ENCODE measurements at regions of chr11 and their contacts with region 1.

Region 1: GRCh38 chr11:108697872-108698473 is 33.1 kb downstream of the DDX10 start:
- DNase-seq: peak; percentile 61
- H3K4me3 ChIP-seq: no peak overlapping the region
- H3K27ac ChIP-seq: peak overlapping the region; percentile 65
- H3K4me1 ChIP-seq: peaks cover 27% of the 10 kb centered on the region
- H3K27me3 ChIP-seq: no peaks in the 10 kb centered on the region
- CTCF ChIP-seq: peak; percentile 99

Region 2: GRCh38 chr11:108654994-108655631 is 42.9 kb before region 1 on chr11:
- CTCF ChIA-PET with region 1: no interaction called
- dilution Hi-C with region 1: no loop called
- in situ Hi-C with region 1: no loop called
- intact Hi-C with region 1: no loop called
- DNase-seq: peak; percentile 46
- H3K4me3 ChIP-seq: no peak overlapping the region
- H3K27ac ChIP-seq: no peak overlapping the region
- H3K4me1 ChIP-seq: no peaks in the 10 kb centered on the region
- H3K27me3 ChIP-seq: no peaks in the 10 kb centered on the region
- CTCF ChIP-seq: peak; percentile 61 to 82

Region 3: DNA sequence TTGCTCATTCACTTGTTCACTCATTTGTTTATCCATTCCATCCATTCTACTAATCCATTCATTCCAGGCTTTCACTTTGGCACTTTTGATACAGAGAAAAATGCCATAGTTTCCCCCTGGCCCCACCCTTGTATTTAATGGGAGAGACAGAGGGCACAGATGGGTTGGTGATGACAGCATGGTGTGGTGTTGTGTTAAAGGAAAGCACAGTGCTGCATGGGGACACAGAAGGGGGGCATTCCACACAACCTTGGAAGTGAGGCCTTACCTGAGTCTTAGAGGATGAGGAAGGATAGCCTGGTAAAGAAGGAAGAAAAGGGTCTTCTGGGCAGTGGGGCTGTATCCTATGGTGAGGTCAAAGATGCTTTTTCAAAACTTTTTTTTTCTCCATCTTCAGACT is 475.5 kb after region 1 on chr11:
- CTCF ChIA-PET with region 1: no interaction called
- dilution Hi-C with region 1: no loop called
- in situ Hi-C with region 1: no loop called
- intact Hi-C with region 1: loop called (anchors 10 kb)
- DNase-seq: no peak
- H3K4me3 ChIP-seq: no peak overlapping the region
- H3K27ac ChIP-seq: no peak overlapping the region
- H3K4me1 ChIP-seq: no peaks in the 10 kb centered on the region
- H3K27me3 ChIP-seq: no peaks in the 10 kb centered on the region
- CTCF ChIP-seq: no peak

Region 4: DNA sequence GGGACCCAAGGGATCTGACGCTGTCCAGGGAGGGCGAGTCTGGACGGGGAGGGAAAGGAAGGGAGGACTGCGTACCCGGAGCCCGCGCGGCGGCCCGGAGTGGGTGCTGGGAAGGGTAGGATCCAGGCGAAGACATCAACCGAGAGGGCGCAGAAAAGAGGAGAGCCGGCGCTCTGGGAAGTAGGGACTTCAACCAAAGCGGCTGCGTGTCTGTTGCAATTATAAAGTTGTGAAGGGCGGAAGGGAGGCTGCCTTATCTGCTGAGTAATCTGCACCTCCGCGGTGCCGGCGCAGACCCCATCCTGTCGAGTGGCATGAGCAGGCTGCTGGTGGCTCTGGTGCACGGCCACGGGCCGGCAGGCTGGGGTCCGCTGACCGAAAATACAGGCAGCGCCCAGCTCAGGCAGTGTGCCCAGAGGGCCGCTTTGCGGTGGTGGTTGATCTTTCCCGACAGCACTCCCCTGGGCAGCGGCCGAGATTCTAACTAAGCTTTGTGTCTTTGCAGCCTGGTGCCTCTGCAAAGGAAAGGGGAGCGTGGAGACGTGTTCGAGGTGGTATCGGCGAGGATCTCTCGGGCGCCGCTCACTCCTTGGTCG is 725.0 kb after region 1 on chr11:
- CTCF ChIA-PET with region 1: no interaction called
- dilution Hi-C with region 1: no loop called
- in situ Hi-C with region 1: no loop called
- intact Hi-C with region 1: loop called (anchors 10 kb)
- DNase-seq: peak; percentile 20
- H3K4me3 ChIP-seq: peak overlapping the region; percentile 40 to 47 (median 44)
- H3K27ac ChIP-seq: no peak overlapping the region
- H3K4me1 ChIP-seq: peaks cover 18% of the 10 kb centered on the region
- H3K27me3 ChIP-seq: peaks cover 19% of the 10 kb centered on the region
- CTCF ChIP-seq: no peak

Region 5: DNA sequence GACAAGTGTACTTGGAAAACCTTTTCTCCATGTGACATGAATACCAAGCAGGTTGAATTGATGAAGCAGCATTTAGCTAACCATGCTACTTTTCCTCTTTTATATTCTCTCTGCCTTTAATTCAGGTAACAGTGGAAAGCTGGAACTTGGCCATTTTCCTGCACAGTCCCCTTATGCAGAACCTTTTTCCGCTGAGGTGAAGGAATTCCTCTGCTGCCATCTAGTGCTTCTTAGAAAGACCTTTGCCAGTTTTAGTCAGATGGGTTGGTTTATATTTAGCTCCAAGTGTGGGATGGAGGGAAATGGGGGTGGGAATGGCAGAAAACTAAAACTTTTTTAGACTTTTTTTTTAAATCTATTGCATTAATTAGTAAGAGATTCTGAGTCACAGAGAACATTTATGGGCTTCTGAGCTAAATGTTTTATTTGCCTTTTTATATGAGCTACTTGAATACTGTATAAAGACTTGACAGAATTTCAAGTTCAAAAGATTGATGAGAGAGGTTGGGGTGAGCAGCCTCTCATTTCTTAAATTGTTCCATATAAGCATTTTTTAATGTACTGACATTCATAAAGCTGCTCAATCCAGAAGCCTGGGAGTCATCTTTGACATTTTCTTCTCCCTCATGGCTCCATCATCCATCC is 1241.3 kb after region 1 on chr11:
- CTCF ChIA-PET with region 1: interaction called, 9 read pairs
- dilution Hi-C with region 1: no loop called
- in situ Hi-C with region 1: loop called in 1 of 2 experiments (anchors 25 kb)
- intact Hi-C with region 1: loop called (anchors 1 kb)
- DNase-seq: peak; percentile 68
- H3K4me3 ChIP-seq: no peak overlapping the region
- H3K27ac ChIP-seq: no peak overlapping the region
- H3K4me1 ChIP-seq: peaks cover 3% of the 10 kb centered on the region
- H3K27me3 ChIP-seq: no peaks in the 10 kb centered on the region
- CTCF ChIP-seq: peak; percentile 64 to 79

Measured in mammary epithelial cell (primary cell).